B cell (primary cell): ENCODE measurements at regions of chr11 and their contacts with region 1.

Region 1: GRCh38 chr11:131674051-131674755 is 303.8 kb downstream of the NTM start:
- DNase-seq: peak; percentile 21
- ATAC-seq: no peak
- H3K4me3 ChIP-seq: no peak overlapping the region
- H3K4me3 Mint-ChIP-seq: no peak overlapping the region
- H3K27ac ChIP-seq: no peak overlapping the region
- H3K27ac Mint-ChIP-seq: no peak overlapping the region
- H3K4me1 ChIP-seq: no peaks in the 10 kb centered on the region
- H3K4me1 Mint-ChIP-seq: no peaks in the 10 kb centered on the region
- H3K27me3 ChIP-seq: no peaks in the 10 kb centered on the region
- H3K27me3 Mint-ChIP-seq: no peaks in the 10 kb centered on the region
- CTCF ChIP-seq: peak; percentile 67

Region 2: GRCh38 chr11:130924770-130925169 is 749.4 kb before region 1 on chr11:
- CTCF ChIA-PET with region 1: no interaction called
- POLR2A ChIA-PET with region 1: no interaction called
- intact Hi-C with region 1: loop called (anchors 5 kb)
- DNase-seq: no peak
- ATAC-seq: no peak
- H3K4me3 ChIP-seq: no peak overlapping the region
- H3K4me3 Mint-ChIP-seq: no peak overlapping the region
- H3K27ac ChIP-seq: no peak overlapping the region
- H3K27ac Mint-ChIP-seq: no peak overlapping the region
- H3K4me1 ChIP-seq: no peaks in the 10 kb centered on the region
- H3K4me1 Mint-ChIP-seq: no peaks in the 10 kb centered on the region
- H3K27me3 ChIP-seq: peaks cover 0 to 13% (median 1%) of the 10 kb centered on the region in 4 experiments
- H3K27me3 Mint-ChIP-seq: peaks cover 26% of the 10 kb centered on the region
- CTCF ChIP-seq: no peak

Region 3: DNA sequence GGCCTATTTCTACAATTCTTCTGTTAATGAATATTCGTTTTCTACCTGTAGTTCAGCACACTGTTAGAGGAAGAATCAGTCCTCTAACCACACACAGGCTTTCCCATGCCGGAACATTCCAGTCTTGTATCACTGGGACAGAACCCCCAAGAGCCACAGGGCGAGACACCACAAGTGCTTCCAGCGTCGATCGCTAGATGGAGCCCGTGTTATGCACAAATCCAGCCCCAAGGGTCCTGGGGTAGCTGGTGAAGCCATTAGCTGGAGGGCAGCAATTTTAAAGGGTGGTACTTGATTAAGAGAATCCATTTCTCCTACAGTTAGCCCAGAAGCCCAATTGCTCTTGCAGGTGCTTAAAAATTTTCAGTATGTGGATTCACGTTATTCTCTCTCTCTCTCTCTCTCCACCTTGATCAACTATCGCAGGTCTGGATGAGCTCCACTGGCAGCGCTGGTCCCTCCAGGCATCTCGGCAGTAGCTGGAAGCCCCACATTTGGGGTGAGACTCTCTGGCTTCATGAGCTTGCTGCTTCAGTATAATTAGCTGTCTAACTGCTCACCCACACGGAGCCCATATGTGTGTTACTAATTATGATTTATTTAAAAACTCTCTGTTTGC is 609.7 kb before region 1 on chr11:
- CTCF ChIA-PET with region 1: interaction called, 10 read pairs
- POLR2A ChIA-PET with region 1: no interaction called
- intact Hi-C with region 1: loop called (anchors 5 kb)
- DNase-seq: peak; percentile 9
- ATAC-seq: no peak
- H3K4me3 ChIP-seq: no peak overlapping the region
- H3K4me3 Mint-ChIP-seq: no peak overlapping the region
- H3K27ac ChIP-seq: no peak overlapping the region
- H3K27ac Mint-ChIP-seq: no peak overlapping the region
- H3K4me1 ChIP-seq: no peaks in the 10 kb centered on the region
- H3K4me1 Mint-ChIP-seq: no peaks in the 10 kb centered on the region
- H3K27me3 ChIP-seq: peaks cover 0 to 3% (median 0%) of the 10 kb centered on the region in 4 experiments
- H3K27me3 Mint-ChIP-seq: peaks cover 14% of the 10 kb centered on the region
- CTCF ChIP-seq: peak; percentile 50

Region 4: GRCh38 chr11:131710511-131710910 is 36.3 kb after region 1 on chr11:
- CTCF ChIA-PET with region 1: no interaction called
- POLR2A ChIA-PET with region 1: no interaction called
- intact Hi-C with region 1: no loop called
- DNase-seq: no peak
- ATAC-seq: no peak
- H3K4me3 ChIP-seq: no peak overlapping the region
- H3K4me3 Mint-ChIP-seq: no peak overlapping the region
- H3K27ac ChIP-seq: no peak overlapping the region
- H3K27ac Mint-ChIP-seq: no peak overlapping the region
- H3K4me1 ChIP-seq: no peaks in the 10 kb centered on the region
- H3K4me1 Mint-ChIP-seq: no peaks in the 10 kb centered on the region
- H3K27me3 ChIP-seq: no peaks in the 10 kb centered on the region
- H3K27me3 Mint-ChIP-seq: no peaks in the 10 kb centered on the region
- CTCF ChIP-seq: no peak